ENCODE measurements at regions of chr10 and their contacts with region 1.

Region 1: GRCh38 chr10:6114805-6115341 is 26.0 kb downstream of the RBM17 start:
- DNase-seq: peak; percentile 59
- ATAC-seq: peak; percentile 25; the same call in 1 of the 2 replicates
- H3K4me3 ChIP-seq: no peak overlapping the region
- H3K27ac ChIP-seq: peak overlapping the region; percentile 19; the same call in 1 of the 2 replicates
- H3K4me1 ChIP-seq: peaks cover 14% of the 10 kb centered on the region
- H3K27me3 ChIP-seq: no peaks in the 10 kb centered on the region
- CTCF ChIP-seq: no peak
- POLR2A ChIP-seq: no peak
- RAD21 ChIP-seq: no peak

Region 2: GRCh38 chr10:6195846-6196245 is 81.0 kb after region 1 on chr10:
- CTCF ChIA-PET with region 1: no interaction called
- POLR2A ChIA-PET with region 1: no interaction called
- dilution Hi-C with region 1: no loop called
- in situ Hi-C with region 1: loop called (anchors 5 kb)
- intact Hi-C with region 1: no loop called
- DNase-seq: no peak
- ATAC-seq: no peak
- H3K4me3 ChIP-seq: no peak overlapping the region
- H3K27ac ChIP-seq: no peak overlapping the region
- H3K4me1 ChIP-seq: peaks cover 25% of the 10 kb centered on the region
- H3K27me3 ChIP-seq: no peaks in the 10 kb centered on the region
- CTCF ChIP-seq: no peak
- POLR2A ChIP-seq: no peak
- RAD21 ChIP-seq: no peak